Activated T-helper 2 cell treated with anti-CD3 and anti-CD28 coated beads, Interferon-gamma antibody, Interleukin-2, Interleukin-4, amounts not matched to agents 10 μg/mL and 5 μg/mL and 100 μg/mL, durations not matched to agents 14 hours and 24 hours and 36 hours (primary cell): ENCODE measurements at regions of chr1 and their contacts with region 1.

Region 1: DNA sequence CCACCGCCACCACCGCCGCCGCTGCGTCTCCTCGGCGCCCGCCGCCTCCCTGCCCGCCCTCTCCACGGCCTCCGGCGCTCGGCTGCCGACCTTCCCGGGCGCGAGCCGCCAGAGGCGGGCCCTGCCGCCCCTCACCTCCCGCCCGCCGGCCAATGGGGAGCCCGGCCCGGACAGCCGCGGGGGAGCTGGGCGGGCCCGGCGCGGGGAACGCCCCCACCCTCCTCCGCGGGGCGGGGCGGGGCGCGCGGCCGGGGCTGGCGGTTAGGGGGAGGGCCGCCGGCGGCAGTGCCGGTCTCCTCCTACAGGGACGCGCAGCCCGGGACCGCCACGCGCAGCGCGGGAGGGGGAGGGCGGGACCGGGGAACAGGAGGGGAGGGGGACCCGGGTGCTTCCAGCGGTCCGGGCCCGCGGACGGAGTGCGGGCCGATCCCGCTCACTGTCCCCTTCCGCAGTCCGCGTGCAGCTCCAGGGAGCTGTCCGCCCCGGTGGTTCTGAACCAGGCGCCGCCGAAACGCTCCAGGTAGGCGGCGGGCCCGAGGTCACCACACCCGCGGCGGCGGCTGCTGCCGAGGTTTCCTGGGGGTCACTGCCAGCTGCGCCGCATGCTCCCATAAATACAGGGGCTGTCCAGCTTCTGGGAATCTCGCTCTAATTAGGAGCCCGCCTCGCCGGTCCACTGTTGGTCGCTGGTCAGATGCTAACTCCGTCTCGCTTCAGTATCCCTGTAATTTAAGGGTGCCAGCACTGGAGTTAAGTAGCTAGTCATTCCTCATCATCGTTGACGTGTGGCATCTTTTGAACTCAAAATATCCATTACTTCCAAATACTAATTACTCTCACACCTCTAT is at the start of gene PGBD5:
- DNase-seq: peak; percentile 65
- H3K4me3 Mint-ChIP-seq: peak within 1 kb of the TSS; percentile 64
- H3K27ac Mint-ChIP-seq: no peak within 1 kb of the TSS
- H3K4me1 Mint-ChIP-seq: peaks cover 8% of the 10 kb centered on the region
- H3K27me3 Mint-ChIP-seq: peaks cover 58% of the 10 kb centered on the region
- total RNA-seq, gene PGBD5: not detected in 2 replicates

Region 2: DNA sequence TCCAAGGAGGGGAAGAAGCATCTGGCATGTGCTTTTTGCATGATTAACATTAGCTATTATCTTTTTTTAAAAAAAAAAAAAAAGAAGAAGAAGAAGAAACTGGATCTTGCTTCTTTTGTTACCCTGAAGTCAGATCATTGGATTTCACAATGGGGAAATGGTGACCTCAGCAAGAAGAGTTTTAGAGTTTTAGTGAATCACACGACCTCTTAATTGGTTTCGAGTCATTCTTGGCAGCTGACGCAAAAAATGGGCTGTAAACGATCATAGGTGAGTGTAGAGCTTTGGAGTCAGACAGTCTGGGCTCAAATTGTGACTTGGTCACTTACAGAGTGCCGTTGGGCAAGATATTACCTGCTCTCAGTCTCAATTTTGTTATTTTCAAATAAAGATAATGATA is 33.0 kb after region 1 on chr1:
- intact Hi-C with region 1: no loop called
- DNase-seq: no peak
- H3K4me3 Mint-ChIP-seq: no peak overlapping the region
- H3K27ac Mint-ChIP-seq: no peak overlapping the region
- H3K4me1 Mint-ChIP-seq: no peaks in the 10 kb centered on the region
- H3K27me3 Mint-ChIP-seq: peaks cover 23% of the 10 kb centered on the region

Region 3: GRCh38 chr1:230594214-230594773 is 167.8 kb after region 1 on chr1:
- intact Hi-C with region 1: no loop called
- DNase-seq: no peak
- H3K4me3 Mint-ChIP-seq: no peak overlapping the region
- H3K27ac Mint-ChIP-seq: no peak overlapping the region
- H3K4me1 Mint-ChIP-seq: no peaks in the 10 kb centered on the region
- H3K27me3 Mint-ChIP-seq: peaks cover 8% of the 10 kb centered on the region

Region 4: GRCh38 chr1:231162297-231162969 is 736.0 kb after region 1 on chr1:
- intact Hi-C with region 1: loop called (anchors 5 kb)
- DNase-seq: peak; percentile 27
- H3K4me3 Mint-ChIP-seq: no peak overlapping the region
- H3K27ac Mint-ChIP-seq: no peak overlapping the region
- H3K4me1 Mint-ChIP-seq: no peaks in the 10 kb centered on the region
- H3K27me3 Mint-ChIP-seq: peaks cover 66% of the 10 kb centered on the region